Sigmoid colon (tissue), 7 donors: ENCODE measurements at regions of chr14 and their contacts with region 1.

Region 1: DNA sequence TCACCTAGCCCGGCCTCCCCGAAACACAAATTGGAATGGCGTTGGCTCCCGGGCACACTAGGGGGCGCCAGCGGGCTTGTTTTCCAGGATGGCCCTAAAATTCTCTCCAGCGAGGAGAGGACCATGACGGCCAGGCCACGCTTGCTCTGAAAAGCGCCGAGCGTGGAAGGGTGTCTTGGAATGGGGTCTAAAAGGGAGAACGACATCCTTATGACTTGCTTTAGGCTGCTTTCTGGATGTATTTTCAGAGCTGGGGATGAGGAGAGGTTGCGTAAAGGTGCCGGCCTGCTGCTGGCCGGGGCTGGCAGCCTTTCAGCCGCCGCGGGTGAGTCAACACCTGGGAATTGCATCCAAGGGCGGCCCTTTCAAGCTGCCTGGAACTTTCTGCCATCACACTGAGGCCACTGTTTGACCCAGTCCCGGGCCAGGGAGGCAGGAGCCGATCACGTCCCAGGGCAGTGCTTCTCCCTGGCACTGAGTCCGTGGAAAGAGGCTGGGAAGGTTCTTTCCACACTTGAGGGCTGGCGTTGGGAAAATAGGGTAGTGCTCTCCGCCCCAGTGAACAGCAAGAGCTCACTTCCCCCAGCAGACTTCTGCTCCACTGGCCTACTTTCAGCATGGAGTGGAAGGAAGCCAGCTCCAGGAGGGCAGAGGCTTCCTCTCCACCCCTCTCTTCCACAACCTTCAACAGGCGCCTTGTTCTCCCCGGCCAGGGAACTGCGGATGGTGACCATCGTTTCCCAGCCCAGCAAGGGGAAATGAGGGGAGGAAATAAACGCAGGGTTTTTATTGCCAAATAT is 216.2 kb downstream of the TTC8 start:
- DNase-seq: peak; percentile 95
- H3K4me3 ChIP-seq: peak overlapping the region; percentile 3 to 48 (median 39)
- H3K27ac ChIP-seq: peak overlapping the region; percentile 79 to 93 (median 86)
- H3K4me1 ChIP-seq: peaks cover 0 to 10% (median 8%) of the 10 kb centered on the region in 4 donors
- H3K27me3 ChIP-seq: no peaks in the 10 kb centered on the region
- CTCF ChIP-seq: peak; percentile 90 to 94 (median 94)
- EP300 ChIP-seq: peak in 2 of 4 donors; percentile 9 to 28
- POLR2A ChIP-seq: no peak

Region 2: DNA sequence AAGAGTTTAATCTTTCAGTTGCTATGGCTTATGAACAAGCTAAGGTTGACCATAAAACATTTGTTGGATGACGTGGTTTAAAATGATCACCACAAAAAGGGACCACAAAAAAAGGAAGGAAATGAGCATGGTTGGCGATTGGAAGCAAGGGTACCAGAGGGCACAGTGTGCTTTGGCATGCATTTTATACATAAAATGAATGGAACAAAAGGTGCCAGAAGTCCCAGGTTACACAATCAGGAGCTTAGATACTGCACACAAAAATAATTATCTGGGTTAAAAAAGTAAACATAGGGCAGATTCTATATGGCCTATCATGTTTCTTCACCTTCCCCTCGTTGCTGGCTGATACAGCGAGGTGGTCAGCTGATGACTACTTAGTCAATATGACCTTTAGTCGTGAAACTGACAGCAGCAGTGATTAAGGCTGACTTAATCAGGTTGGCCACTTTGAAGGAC is 427.1 kb before region 1 on chr14:
- intact Hi-C with region 1: no loop called
- DNase-seq: no peak
- H3K4me3 ChIP-seq: no peak overlapping the region
- H3K27ac ChIP-seq: peak overlapping the region in 1 of 4 donors; percentile 15
- H3K4me1 ChIP-seq: peaks cover 0 to 16% (median 4%) of the 10 kb centered on the region in 4 donors
- H3K27me3 ChIP-seq: no peaks in the 10 kb centered on the region
- CTCF ChIP-seq: no peak
- EP300 ChIP-seq: peak in 1 of 4 donors; percentile 16
- POLR2A ChIP-seq: no peak

Region 3: GRCh38 chr14:89000007-89000942 is 40.4 kb before region 1 on chr14:
- intact Hi-C with region 1: no loop called
- DNase-seq: no peak
- H3K4me3 ChIP-seq: no peak overlapping the region
- H3K27ac ChIP-seq: no peak overlapping the region
- H3K4me1 ChIP-seq: no peaks in the 10 kb centered on the region
- H3K27me3 ChIP-seq: no peaks in the 10 kb centered on the region
- CTCF ChIP-seq: no peak
- EP300 ChIP-seq: no peak
- POLR2A ChIP-seq: no peak

Region 4: DNA sequence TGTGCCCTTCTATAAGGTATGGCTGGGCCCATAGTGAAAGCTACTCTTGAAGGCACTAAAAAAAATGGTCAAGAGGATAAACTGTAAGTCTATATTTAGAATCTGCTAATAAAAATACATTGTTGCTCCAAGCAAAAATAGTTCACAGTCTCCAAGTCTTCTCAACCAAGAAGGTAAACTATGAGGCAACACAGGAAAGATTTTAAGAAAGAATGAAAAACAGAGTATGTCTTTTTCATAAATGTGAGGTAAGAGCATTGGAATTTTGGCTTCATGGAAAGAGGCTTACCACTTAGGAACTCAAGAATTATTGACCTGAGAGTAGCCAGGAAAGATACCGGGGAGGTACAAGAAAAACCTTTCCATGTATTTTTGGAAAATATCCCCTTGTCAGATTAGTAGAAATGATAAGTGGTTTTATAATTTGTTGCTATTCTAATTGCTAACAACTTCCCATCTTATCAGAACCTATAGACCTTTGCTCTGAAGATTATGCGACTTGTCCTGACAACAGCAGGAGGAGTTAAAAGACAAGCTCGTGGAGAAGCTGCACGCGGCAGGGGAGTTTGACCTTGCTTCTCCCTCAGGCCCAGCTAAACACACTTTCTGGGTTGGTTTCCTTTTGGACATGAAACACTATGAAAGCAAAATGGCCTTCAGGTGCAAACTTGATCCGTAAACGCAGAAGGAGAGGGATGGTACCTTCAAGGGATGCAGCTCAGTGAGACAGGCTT is 138.3 kb after region 1 on chr14:
- intact Hi-C with region 1: loop called (anchors 10 kb)
- DNase-seq: no peak
- H3K4me3 ChIP-seq: no peak overlapping the region
- H3K27ac ChIP-seq: peak overlapping the region in 2 of 4 donors; percentile 0 to 51
- H3K4me1 ChIP-seq: peaks cover 0 to 31% (median 22%) of the 10 kb centered on the region in 4 donors
- H3K27me3 ChIP-seq: no peaks in the 10 kb centered on the region
- CTCF ChIP-seq: no peak
- EP300 ChIP-seq: no peak
- POLR2A ChIP-seq: no peak

Region 5: GRCh38 chr14:89303457-89304435 is 263.1 kb after region 1 on chr14:
- intact Hi-C with region 1: loop called (anchors 5 kb)
- DNase-seq: peak; percentile 91
- H3K4me3 ChIP-seq: peak overlapping the region; percentile 1 to 28 (median 20)
- H3K27ac ChIP-seq: peak overlapping the region; percentile 87 to 95 (median 90)
- H3K4me1 ChIP-seq: peaks cover 0 to 53% (median 45%) of the 10 kb centered on the region in 4 donors
- H3K27me3 ChIP-seq: no peaks in the 10 kb centered on the region
- CTCF ChIP-seq: no peak
- EP300 ChIP-seq: peak; percentile 81 to 98 (median 86)
- POLR2A ChIP-seq: no peak

Region 6: GRCh38 chr14:89618811-89619551 is 578.3 kb after region 1 on chr14:
- intact Hi-C with region 1: loop called (anchors 5 kb)
- DNase-seq: peak; percentile 76
- H3K4me3 ChIP-seq: peak overlapping the region; percentile 55 to 85 (median 68)
- H3K27ac ChIP-seq: peak overlapping the region; percentile 70 to 84 (median 76)
- H3K4me1 ChIP-seq: peaks cover 0 to 28% (median 13%) of the 10 kb centered on the region in 4 donors
- H3K27me3 ChIP-seq: no peaks in the 10 kb centered on the region
- CTCF ChIP-seq: no peak
- EP300 ChIP-seq: no peak
- POLR2A ChIP-seq: no peak

Region 7: DNA sequence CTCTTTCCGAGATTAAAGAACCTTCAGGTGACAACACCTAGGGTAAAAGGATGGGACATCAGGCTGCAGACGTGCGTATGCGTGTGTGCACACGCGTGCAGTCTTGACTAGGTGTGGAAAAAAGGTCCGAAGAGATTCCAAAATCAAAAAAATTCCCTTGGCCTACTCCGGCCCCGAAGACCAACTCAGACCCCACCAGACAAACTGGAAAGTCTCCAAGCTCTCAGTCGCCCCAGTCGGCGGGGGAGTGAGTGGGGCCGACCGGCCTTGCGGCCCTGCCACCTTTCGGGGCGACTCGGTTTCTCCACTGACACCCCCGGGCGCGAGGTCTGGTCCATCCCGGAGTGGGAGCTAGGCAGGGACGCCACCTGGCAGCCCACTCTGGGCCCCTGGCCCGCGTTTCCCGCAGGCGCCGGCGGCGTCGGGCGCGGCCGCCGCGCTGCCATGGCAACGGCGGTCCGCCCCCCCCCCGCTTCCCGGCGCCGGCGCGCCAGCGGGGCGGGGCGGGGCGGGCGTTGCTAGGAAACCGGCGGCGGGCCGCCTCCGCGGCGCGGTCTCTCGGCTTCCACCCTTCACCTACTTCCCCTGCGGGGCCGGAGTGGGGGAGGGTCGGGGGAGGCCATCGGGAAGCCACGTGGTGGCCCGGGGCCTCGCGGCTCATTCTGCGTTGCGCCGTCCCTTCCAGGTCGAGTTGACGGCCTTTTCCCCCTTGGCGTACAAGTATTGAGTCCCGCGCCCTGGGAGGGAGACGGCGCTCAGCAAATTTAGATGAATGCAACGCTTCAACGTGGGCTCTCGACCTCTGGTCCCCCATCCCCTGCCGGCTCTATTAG is 660.8 kb after region 1 on chr14:
- intact Hi-C with region 1: loop called (anchors 5 kb)
- DNase-seq: peak; percentile 92
- H3K4me3 ChIP-seq: peak overlapping the region; percentile 45 to 62 (median 56)
- H3K27ac ChIP-seq: peak overlapping the region; percentile 64 to 83 (median 76)
- H3K4me1 ChIP-seq: peaks cover 0 to 19% (median 16%) of the 10 kb centered on the region in 4 donors
- H3K27me3 ChIP-seq: no peaks in the 10 kb centered on the region
- CTCF ChIP-seq: no peak
- EP300 ChIP-seq: peak in 2 of 4 donors; percentile 44 to 53
- POLR2A ChIP-seq: no peak

Region 8: DNA sequence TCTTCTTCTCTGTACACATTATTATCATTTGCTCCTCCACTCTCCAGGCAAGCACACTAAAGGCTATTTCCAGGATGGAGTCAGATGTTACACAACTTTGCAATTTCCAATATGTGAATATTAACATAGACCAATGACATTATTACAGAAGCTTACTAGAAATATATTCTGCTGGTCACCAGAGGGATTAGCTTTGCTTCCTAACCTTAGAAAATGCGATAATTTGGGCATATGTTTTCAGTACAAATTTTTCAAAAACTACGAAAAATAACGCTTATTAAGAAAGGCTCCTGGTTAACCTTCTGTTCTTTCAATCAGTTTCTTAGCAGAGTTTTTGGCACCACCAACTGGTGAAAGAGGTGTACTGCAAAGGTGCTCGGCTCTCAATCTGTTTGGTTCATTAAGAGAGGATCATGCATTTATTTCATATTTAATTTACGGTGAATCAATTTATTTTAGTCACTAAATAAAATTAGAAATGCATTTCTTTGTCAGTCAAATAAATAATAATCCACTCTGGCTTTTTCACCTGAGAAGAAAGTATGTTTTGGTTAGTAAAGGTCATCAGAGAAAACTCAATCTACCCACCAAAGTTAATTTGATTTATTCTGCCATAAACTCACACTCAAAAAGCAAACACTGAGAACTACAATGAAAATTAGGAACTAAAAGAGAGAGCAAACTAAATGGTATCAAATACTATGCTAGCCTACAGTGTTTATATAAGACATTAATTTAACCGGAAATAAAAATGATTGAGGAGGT is 874.6 kb after region 1 on chr14:
- intact Hi-C with region 1: loop called (anchors 2 kb)
- DNase-seq: peak; percentile 72
- H3K4me3 ChIP-seq: no peak overlapping the region
- H3K27ac ChIP-seq: peak overlapping the region in 1 of 4 donors; percentile 22
- H3K4me1 ChIP-seq: peaks cover 0 to 39% (median 33%) of the 10 kb centered on the region in 4 donors
- H3K27me3 ChIP-seq: no peaks in the 10 kb centered on the region
- CTCF ChIP-seq: peak; percentile 79 to 93 (median 89)
- EP300 ChIP-seq: no peak
- POLR2A ChIP-seq: no peak